CD4-positive, alpha-beta T cell (primary cell): ENCODE measurements at regions of chr1 and their contacts with region 1.

Region 1: DNA sequence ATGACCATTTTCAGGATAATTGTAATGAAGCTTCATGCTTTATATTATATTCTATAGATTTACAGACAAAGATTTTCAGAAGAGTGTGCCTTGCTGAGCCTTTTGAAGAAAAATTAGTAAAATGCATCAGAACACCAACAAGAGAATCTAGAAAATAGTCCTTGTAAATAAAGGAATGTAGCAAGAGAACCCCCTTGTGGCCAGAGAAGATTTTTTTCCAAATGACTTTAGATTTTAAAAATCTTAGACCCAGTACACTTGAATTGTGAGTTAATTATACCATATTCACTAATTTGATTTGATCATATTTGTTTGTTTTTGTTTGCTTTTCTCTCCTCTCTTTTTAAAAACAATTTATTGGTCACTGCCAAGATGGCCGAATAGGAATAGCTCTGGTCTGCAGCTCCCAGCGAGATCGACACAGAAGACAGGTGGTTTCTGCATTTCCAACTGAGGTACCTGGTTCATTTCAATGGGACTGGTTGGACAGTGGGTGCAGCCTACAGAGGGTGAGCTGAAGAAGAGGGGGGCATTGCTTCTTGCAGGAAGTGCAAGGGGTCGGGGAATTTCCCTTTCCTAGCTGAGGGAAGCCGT is 12.8 kb upstream of the IFI44L start:
- DNase-seq: no peak
- ATAC-seq: no peak
- H3K4me3 ChIP-seq: no peak overlapping the region
- H3K4me3 Mint-ChIP-seq: no peak overlapping the region
- H3K27ac ChIP-seq: no peak overlapping the region
- H3K27ac Mint-ChIP-seq: no peak overlapping the region
- H3K4me1 ChIP-seq: no peaks in the 10 kb centered on the region
- H3K4me1 Mint-ChIP-seq: peaks cover 12% of the 10 kb centered on the region
- H3K27me3 ChIP-seq: no peaks in the 10 kb centered on the region
- H3K27me3 Mint-ChIP-seq: peaks cover 5% of the 10 kb centered on the region
- CTCF ChIP-seq: no peak

Region 2: GRCh38 chr1:78126506-78126905 is 480.9 kb before region 1 on chr1:
- CTCF ChIA-PET with region 1: no interaction called
- POLR2A ChIA-PET with region 1: no interaction called
- intact Hi-C with region 1: loop called (anchors 1 to 5 kb)
- DNase-seq: no peak
- ATAC-seq: no peak
- H3K4me3 ChIP-seq: no peak overlapping the region
- H3K4me3 Mint-ChIP-seq: no peak overlapping the region
- H3K27ac ChIP-seq: no peak overlapping the region
- H3K27ac Mint-ChIP-seq: no peak overlapping the region
- H3K4me1 ChIP-seq: no peaks in the 10 kb centered on the region
- H3K4me1 Mint-ChIP-seq: no peaks in the 10 kb centered on the region
- H3K27me3 ChIP-seq: peaks cover 0 to 2% of the 10 kb centered on the region in 2 experiments
- H3K27me3 Mint-ChIP-seq: no peaks in the 10 kb centered on the region
- CTCF ChIP-seq: no peak

Region 3: GRCh38 chr1:78132174-78132947 is 475.1 kb before region 1 on chr1:
- CTCF ChIA-PET with region 1: no interaction called
- POLR2A ChIA-PET with region 1: no interaction called
- intact Hi-C with region 1: loop called (anchors 1 to 5 kb)
- DNase-seq: no peak
- ATAC-seq: no peak
- H3K4me3 ChIP-seq: no peak overlapping the region
- H3K4me3 Mint-ChIP-seq: no peak overlapping the region
- H3K27ac ChIP-seq: no peak overlapping the region
- H3K27ac Mint-ChIP-seq: no peak overlapping the region
- H3K4me1 ChIP-seq: no peaks in the 10 kb centered on the region
- H3K4me1 Mint-ChIP-seq: no peaks in the 10 kb centered on the region
- H3K27me3 ChIP-seq: no peaks in the 10 kb centered on the region
- H3K27me3 Mint-ChIP-seq: no peaks in the 10 kb centered on the region
- CTCF ChIP-seq: no peak